Activated CD4-positive, alpha-beta T cell treated with anti-CD3 and anti-CD28 coated beads, Interleukin-2, amount 10 ng/mL, durations not matched to agents 24 days and 14 days (primary cell): ENCODE measurements at regions of chr19 and their contacts with region 1.

Region 1: DNA sequence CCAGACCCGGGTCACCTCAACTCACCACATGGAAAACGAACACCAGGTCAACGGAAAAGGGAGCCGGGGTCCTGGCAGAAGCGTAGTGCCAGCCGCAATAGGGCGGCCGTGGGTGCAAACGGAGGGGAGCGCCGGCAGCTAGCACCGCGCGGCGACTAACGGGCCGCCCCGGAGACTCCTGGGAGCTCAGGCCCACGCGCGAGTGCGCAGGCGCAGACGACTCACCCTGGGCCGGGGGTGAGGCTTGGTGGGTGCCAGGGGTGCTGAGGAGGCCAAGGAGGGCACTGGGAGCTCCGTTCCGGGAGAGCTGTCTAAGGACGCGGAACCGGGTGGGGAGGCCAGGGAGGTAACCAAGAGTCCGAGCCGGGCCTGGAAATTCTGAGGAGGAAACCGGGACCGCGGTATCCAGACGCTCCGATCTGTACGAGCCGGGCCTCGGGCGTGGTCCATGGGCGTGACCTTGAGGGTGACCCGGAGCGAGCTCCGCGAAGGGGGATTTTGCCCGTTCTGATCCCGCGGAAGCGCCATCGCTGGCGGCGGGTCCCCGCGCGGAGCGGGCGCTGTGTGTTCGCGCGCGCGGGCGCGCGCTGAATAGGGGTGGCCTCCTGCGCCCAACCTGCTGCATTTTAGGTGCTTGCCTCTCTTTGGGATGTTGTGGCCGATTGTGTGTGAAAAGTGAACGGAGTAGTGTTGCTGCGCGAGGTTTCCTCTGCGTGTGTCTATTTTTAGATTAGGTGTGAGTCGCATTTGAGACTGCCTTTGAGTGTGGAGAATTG is at the start of gene ZNF382:
- DNase-seq: peak; percentile 96
- H3K4me3 Mint-ChIP-seq: peak within 1 kb of the TSS; percentile 89
- H3K27ac Mint-ChIP-seq: peak within 1 kb of the TSS; percentile 98
- H3K4me1 Mint-ChIP-seq: peaks cover 22% of the 10 kb centered on the region
- H3K27me3 Mint-ChIP-seq: no peaks in the 10 kb centered on the region
- total RNA-seq, gene ZNF382: 9.5 and 13.2 TPM in 2 replicates

Region 2: DNA sequence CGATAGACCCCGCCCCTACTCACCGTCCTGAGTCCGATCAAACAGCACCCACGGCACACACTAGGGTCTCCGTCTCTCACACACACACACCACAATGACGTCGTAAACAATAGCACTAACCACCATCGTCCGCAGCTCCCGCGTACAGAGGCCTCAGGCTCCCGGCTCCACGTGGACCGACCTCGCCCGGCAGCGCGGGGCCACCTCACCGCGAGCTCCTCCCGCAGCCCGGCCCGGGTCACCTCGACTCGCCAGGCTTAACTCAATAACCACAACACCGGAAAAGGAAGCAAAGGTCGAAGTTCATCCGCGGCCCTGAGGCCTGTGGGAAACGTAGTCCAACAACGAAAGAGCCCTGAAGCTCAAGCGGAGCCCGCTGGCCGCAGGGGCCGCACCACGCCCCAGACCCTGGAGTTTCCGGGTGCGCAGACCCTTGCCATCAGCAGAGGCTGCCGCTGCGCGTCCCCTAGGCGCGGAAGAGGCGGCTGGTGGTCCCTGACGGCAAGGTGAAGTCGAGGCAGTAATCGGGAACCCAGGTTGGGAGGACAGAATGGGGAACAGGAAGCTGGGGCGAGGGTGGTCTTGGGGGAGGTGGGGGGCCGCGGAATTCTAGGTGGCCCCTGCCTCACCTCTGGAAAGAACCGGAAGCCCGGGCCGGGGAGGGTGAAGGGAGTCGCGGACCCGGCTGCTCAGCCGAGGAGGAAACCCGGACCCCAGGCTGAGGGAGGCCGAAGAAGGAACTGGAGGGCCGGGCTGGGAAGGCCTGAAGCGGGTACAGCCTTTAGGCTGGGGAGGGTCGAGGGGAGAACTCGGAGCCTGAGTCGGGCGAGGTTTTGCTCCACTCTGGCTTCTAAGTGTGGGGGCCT is 32.0 kb before region 1 on chr19 and contains the start of gene ZNF529:
- intact Hi-C with region 1: loop called (anchors 1 kb)
- DNase-seq: peak; percentile 97
- H3K4me3 Mint-ChIP-seq: peak within 1 kb of the TSS; percentile 89
- H3K27ac Mint-ChIP-seq: peak within 1 kb of the TSS; percentile 95
- H3K4me1 Mint-ChIP-seq: peaks cover 24% of the 10 kb centered on the region
- H3K27me3 Mint-ChIP-seq: no peaks in the 10 kb centered on the region
- total RNA-seq, gene ZNF529: 16.8 and 17.6 TPM in 2 replicates

Region 3: DNA sequence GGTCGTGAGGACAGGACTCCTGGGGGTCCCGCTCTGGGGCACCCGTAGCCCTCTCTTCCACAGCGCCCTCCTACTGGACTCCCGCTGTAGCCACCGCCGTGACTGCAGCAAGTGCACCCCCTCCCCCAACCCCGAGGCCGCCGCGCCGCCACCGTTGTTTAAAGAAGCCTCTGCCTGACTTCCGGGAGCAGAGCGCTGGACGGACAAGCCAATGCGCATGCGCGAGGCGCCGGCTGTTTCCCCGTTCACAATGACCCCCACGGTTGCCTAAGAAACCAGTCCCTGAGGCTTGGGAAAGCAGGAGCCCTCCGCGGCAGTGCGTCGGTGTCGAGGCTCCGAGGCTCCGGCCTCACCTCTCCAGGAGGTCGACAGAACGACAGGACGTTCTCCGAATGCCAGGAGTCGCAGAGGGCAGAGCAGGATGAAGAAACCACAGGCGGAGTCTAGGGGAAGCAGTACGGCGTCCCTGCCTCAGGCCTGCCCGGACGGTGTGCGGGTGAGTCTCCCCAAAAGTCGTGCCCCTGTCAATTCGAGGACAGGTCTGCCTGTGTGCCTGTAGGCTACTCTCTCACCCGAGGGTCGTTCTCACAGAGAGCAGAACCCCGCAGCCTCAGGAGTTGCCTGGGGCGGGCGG is 402.4 kb after region 1 on chr19:
- intact Hi-C with region 1: no loop called
- DNase-seq: peak; percentile 82
- H3K4me3 Mint-ChIP-seq: peak overlapping the region; percentile 82
- H3K27ac Mint-ChIP-seq: peak overlapping the region; percentile 80
- H3K4me1 Mint-ChIP-seq: peaks cover 2% of the 10 kb centered on the region
- H3K27me3 Mint-ChIP-seq: no peaks in the 10 kb centered on the region